Heart left ventricle (tissue), 16 donors: ENCODE measurements at regions of chr13 and their contacts with region 1.

Region 1: DNA sequence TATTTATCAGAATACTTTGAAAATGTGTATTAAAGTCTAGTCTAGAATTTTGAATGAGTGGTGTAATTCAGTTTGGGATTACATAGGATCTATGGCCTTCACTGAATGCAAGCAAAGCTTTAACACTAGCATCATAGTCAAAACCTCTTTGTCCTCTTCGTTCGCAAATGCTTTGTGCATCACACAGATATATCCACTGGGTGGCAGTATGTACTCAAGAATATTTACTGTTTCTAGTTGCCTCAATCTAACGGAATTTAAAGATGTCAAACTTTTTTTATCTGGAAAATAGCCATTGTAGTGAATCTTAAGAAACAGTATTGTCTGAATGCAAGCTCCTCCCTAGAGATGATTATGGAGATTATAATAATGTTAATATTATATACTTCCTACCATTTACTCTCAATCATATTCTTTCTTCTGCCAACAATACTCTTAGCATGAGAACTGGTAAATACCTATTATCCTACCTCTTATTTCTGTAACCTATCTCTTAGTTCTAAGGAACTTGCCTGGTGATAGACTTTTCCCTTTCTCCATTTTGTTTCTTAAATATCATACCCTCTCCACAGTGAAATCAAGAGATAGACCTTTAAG is 25.8 kb downstream of the LACC1 start:
- DNase-seq: peak in 1 of 5 donors; percentile 14
- ATAC-seq: peak in 3 of 4 donors; percentile 65 to 71 (median 66)
- H3K4me3 ChIP-seq: no peak overlapping the region
- H3K27ac ChIP-seq: no peak overlapping the region
- H3K4me1 ChIP-seq: peaks cover 0 to 14% (median 0%) of the 10 kb centered on the region in 12 donors
- H3K27me3 ChIP-seq: peaks cover 0 to 6% (median 0%) of the 10 kb centered on the region in 9 donors
- CTCF ChIP-seq: peak; percentile 61 to 87 (median 82)
- POLR2A ChIP-seq: no peak

Region 2: DNA sequence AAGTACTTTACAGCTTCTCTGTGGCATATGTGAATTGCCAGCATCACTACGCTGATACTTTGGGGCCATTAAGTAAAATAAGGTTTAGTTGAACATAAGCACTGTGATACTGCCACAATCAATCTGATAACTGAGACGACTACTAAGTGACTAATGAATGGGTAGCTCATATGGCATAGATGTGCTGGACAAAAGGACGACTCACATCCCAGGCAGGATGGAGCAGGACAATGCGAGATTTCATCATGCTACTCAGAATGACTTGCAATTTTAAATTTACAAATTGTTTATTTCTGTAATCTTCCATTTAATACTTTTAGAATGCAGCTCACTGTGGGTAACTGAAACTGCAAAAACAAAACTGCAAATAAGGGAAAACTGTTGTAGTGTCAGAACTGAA is 39.6 kb before region 1 on chr13:
- intact Hi-C with region 1: no loop called
- DNase-seq: no peak
- ATAC-seq: no peak
- H3K4me3 ChIP-seq: no peak overlapping the region
- H3K27ac ChIP-seq: no peak overlapping the region
- H3K4me1 ChIP-seq: no peaks in the 10 kb centered on the region
- H3K27me3 ChIP-seq: no peaks in the 10 kb centered on the region
- CTCF ChIP-seq: no peak
- POLR2A ChIP-seq: no peak

Region 3: GRCh38 chr13:44116562-44117332 is 211.2 kb after region 1 on chr13:
- intact Hi-C with region 1: loop called in 1 of 10 experiments (anchors 5 kb)
- DNase-seq: peak in 4 of 5 donors; percentile 28 to 73 (median 48)
- ATAC-seq: peak; percentile 90 to 97 (median 94)
- H3K4me3 ChIP-seq: peak overlapping the region in 1 of 12 donors; percentile 4
- H3K27ac ChIP-seq: peak overlapping the region; percentile 40 to 81 (median 72)
- H3K4me1 ChIP-seq: peaks cover 0 to 30% (median 22%) of the 10 kb centered on the region in 12 donors
- H3K27me3 ChIP-seq: no peaks in the 10 kb centered on the region
- CTCF ChIP-seq: peak in 7 of 12 donors; percentile 10 to 30 (median 15)
- POLR2A ChIP-seq: no peak

Region 4: DNA sequence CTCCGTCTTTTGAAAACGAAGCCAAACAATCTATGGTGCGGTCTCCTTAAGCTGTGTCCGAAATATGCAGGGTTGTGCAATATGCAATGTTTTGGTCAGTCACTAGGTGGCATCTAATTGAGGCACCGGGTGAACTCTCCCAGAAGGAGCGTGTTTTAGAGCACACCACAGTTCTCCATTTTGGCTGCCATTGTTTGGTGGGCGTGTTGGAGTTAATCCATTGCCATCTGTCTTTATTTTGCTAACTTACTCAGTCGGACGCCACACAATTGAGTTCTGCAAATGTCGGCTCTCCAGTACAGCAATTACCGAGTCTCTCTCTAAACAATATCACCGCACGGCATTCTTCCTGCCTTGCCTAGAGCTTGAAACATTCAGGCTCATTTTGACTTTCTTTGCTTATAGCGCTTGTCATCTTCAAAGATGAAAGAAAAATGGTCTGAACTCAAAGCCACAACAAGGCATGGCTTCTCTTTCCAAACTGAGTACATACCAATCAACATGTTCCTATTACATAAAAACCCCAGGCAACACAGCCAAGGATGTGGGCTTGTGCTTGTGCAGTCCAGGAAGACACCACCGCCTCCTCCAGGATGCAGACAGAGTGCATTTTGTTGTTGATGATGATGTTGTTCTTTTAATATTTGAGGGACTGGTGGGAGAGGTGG is 286.1 kb after region 1 on chr13:
- intact Hi-C with region 1: loop called in 3 of 10 experiments (anchors 5 to 10 kb)
- DNase-seq: peak in 4 of 5 donors; percentile 38 to 62 (median 58)
- ATAC-seq: peak; percentile 89 to 94 (median 94)
- H3K4me3 ChIP-seq: peak overlapping the region in 5 of 12 donors; percentile 9 to 28 (median 10)
- H3K27ac ChIP-seq: peak overlapping the region in 7 of 12 donors; percentile 13 to 62 (median 32)
- H3K4me1 ChIP-seq: peaks cover 0 to 7% (median 0%) of the 10 kb centered on the region in 12 donors
- H3K27me3 ChIP-seq: no peaks in the 10 kb centered on the region
- CTCF ChIP-seq: peak; percentile 57 to 85 (median 75)
- POLR2A ChIP-seq: no peak

Region 5: DNA sequence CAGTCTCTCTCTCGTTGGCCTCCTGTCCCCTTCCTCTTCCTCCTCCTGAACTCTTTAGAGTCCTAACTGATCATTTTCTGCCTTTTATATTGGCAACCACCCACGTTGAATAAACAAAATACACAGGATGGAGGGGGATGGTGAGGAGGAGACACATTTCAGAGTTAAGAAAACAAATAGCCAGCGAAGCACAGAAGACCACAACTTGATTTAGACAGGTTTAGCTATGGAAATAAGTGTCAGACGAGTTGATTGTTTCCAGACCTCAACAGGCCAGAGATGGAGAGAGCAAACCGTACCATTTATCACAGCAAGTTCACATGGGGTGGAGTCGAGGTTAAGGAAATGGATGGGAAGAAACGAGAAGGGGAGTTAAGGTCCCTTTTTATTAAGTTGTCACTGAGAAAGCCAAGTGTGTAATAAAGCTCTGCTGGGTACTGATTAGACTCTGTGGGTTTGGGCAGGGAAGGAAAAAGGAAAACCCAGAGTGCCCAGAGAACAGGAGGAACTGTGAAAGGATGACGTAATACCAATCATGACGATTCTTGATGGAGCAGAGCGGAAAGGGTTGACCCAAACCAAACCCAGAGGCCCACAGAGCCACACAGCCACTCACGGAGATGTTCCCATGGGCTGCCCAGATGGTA is 457.0 kb after region 1 on chr13:
- intact Hi-C with region 1: no loop called
- DNase-seq: no peak
- ATAC-seq: no peak
- H3K4me3 ChIP-seq: no peak overlapping the region
- H3K27ac ChIP-seq: peak overlapping the region in 1 of 12 donors; percentile 43
- H3K4me1 ChIP-seq: peaks cover 0 to 17% (median 2%) of the 10 kb centered on the region in 12 donors
- H3K27me3 ChIP-seq: no peaks in the 10 kb centered on the region
- CTCF ChIP-seq: no peak
- POLR2A ChIP-seq: no peak

Region 6: DNA sequence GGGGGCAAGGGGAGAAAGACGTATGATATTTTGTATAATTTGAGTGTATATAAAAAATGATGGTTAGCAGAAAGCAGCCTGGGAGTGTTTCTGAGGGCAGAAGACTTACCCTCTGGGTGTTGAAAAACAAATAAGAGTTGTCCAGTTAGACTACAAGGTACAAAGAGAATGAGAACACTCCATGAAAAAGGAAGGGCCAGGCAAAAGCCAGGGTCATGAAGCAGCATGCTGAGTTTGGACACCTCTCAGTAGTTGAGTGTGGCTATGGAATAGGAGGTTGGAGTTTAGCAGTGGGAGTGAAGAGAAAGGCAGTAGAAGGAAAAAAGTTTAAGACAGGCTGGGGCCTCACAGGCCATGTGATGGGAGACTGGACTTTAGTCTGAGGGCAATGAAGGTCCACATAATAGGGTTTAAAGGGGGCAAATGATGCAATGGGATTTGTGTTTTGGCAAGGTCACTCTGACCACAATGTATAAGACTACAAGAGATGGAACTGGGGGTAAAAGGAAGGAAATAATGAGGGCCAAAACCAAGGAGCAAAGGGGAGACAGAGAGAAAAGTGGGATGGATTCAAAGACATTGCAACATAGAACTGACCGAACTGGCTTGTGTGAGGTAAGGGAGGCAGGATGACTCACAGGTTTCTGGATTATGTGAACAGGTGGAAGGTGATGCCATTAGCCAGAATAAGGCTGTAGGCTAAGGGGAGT is 544.6 kb after region 1 on chr13:
- intact Hi-C with region 1: loop called in 1 of 10 experiments (anchors 5 kb)
- DNase-seq: no peak
- ATAC-seq: no peak
- H3K4me3 ChIP-seq: no peak overlapping the region
- H3K27ac ChIP-seq: no peak overlapping the region
- H3K4me1 ChIP-seq: peaks cover 0 to 7% (median 0%) of the 10 kb centered on the region in 12 donors
- H3K27me3 ChIP-seq: no peaks in the 10 kb centered on the region
- CTCF ChIP-seq: no peak
- POLR2A ChIP-seq: no peak

Region 7: GRCh38 chr13:44969551-44970484 is 1064.3 kb after region 1 on chr13:
- intact Hi-C with region 1: loop called in 8 of 10 experiments (anchors 5 to 10 kb)
- DNase-seq: no peak
- ATAC-seq: peak in 3 of 4 donors; percentile 58 to 70 (median 69)
- H3K4me3 ChIP-seq: no peak overlapping the region
- H3K27ac ChIP-seq: peak overlapping the region in 1 of 12 donors; percentile 20
- H3K4me1 ChIP-seq: peaks cover 0 to 24% (median 6%) of the 10 kb centered on the region in 12 donors
- H3K27me3 ChIP-seq: no peaks in the 10 kb centered on the region
- CTCF ChIP-seq: peak; percentile 69 to 92 (median 82)
- POLR2A ChIP-seq: no peak